Activated CD4-positive, alpha-beta T cell treated with anti-CD3 and anti-CD28 coated beads, Interleukin-2, amount 10 ng/mL, durations not matched to agents 24 days and 14 days (primary cell): ENCODE measurements at regions of chr2 and their contacts with region 1.

Region 1: DNA sequence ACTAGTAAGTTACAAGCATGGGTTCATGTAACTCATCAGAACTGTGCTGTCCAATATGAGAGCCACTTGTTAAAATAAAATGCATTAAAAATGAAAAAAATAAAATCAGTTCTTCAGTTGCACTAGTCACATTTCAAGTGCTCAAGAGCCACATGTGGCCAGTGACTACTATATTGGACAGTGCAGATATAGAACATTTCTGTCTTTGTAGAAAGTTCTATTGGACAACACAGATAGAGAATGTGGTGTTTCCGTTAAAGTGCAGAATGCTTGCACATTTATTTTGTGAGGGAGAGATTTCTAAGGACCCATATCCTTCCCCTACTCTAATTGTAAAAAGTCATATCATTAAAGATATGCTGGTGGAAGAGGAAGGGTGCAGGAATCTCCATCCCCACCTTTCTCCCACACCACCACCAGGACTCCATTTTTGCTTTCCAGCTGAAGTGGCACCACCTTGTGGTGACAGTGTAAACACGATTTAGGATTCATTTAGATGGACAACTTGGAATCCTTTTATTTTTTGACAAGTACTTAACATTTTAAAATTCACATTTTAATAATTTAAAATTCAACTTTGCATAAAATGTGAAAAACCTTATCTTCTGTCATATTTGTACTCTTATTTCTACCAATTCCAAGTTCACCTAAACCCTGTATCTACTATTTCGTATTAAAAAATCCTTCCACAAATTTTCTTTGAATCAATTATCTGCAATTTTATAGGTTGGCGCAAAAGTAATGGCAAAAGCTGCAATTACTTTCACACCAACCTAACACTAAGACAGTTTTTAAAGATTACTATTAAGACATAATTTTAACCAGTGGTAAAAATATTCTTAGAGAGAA is 9.4 kb upstream of the CD302 start:
- DNase-seq: peak; percentile 68
- H3K4me3 Mint-ChIP-seq: no peak overlapping the region
- H3K27ac Mint-ChIP-seq: no peak overlapping the region
- H3K4me1 Mint-ChIP-seq: no peaks in the 10 kb centered on the region
- H3K27me3 Mint-ChIP-seq: no peaks in the 10 kb centered on the region

Region 2: DNA sequence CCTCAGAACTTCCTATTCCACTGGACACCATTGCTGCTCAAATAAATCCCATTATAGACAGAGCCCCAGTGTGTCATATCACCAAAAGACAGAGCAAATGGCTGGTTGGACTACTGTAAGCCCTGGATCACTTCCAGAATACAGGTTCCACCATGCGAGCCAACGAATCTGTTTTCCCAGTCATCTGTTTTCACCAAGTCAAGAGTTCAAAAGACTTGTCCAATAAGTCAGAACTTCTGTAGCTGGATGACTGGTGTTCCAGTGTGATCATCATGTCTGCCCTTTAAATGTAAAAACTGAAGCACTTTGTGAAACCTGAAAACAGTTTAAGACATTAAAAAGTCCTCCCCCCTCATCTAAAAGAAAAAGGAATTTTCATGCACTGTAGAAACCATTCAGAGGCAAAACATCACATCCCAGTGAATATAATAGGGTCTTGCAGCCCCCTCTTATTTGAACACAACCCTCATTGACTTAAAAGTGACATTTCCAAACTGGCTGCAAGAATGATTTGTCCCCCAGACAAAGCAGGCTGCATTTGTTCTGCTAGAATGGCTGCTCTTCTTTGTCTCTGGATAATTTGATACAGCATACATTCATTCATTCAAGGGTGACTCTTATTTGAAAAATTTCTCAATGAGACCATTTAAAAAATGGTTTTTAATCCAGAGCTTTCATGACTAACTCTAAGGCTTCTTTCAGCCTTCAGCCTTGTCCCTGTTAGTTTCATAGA is 903.5 kb before region 1 on chr2:
- intact Hi-C with region 1: loop called (anchors 2 kb)
- DNase-seq: no peak
- H3K4me3 Mint-ChIP-seq: no peak overlapping the region
- H3K27ac Mint-ChIP-seq: no peak overlapping the region
- H3K4me1 Mint-ChIP-seq: no peaks in the 10 kb centered on the region
- H3K27me3 Mint-ChIP-seq: peaks cover 4% of the 10 kb centered on the region